ENCODE measurements at regions of chr16 and their contacts with region 1.

Region 1: GRCh38 chr16:10625593-10626273 is 45.3 kb upstream of the EMP2 start:
- DNase-seq: peak in 1 of 4 experiments; percentile 23
- ATAC-seq: no peak
- H3K4me3 ChIP-seq: no peak overlapping the region
- H3K27ac ChIP-seq: no peak overlapping the region; the same call in 2 of the 3 replicates
- H3K4me1 ChIP-seq: peaks cover 21 to 30% of the 10 kb centered on the region in 2 experiments; a peak in 4 of 5 replicates
- H3K27me3 ChIP-seq: no peaks in the 10 kb centered on the region; a peak in 1 of 5 replicates
- CTCF ChIP-seq: no peak
- EP300 ChIP-seq: peak; percentile 24; the same call in 1 of the 2 replicates
- POLR2A ChIP-seq: no peak
- RAD21 ChIP-seq: no peak

Region 2: DNA sequence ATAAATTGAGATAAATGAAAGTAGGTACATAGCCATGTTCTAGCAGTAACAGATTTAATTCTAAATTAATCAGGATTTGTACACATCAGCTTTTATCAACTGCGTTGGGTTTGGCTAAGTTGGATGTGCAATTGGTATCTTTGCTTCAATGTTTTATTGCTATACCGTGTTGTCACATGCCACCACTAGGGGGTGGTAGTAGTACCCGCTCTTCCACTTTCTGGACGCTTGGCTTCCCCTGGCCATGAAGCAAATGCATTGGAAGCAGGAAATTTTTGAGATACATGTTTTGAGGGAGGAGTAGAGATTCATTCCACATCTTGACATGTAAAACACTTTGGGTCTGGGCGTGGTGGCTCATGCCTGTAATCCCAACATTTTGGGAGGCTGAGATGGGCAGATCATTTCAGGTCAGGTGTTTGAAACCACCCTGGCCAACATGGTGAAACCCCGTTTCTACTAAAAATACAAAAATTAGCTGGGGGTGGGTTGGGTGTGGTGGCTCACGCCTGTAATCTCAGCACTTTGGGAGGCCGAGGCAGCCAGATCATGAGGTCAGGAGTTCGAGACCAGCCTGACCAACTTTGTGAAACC is 104.0 kb before region 1 on chr16:
- CTCF ChIA-PET with region 1: no interaction called
- POLR2A ChIA-PET with region 1: no interaction called
- in situ Hi-C with region 1: no loop called
- intact Hi-C with region 1: loop called (anchors 5 kb)
- DNase-seq: peak; percentile 62 to 80 (median 70)
- ATAC-seq: peak; percentile 88
- H3K4me3 ChIP-seq: no peak overlapping the region
- H3K27ac ChIP-seq: no peak overlapping the region
- H3K4me1 ChIP-seq: no peaks in the 10 kb centered on the region
- H3K27me3 ChIP-seq: peaks cover 6 to 8% of the 10 kb centered on the region in 2 experiments; a peak in 4 of 5 replicates
- CTCF ChIP-seq: peak; percentile 86 to 93 (median 90)
- EP300 ChIP-seq: no peak
- POLR2A ChIP-seq: no peak
- RAD21 ChIP-seq: peak; percentile 51 to 84

Region 3: DNA sequence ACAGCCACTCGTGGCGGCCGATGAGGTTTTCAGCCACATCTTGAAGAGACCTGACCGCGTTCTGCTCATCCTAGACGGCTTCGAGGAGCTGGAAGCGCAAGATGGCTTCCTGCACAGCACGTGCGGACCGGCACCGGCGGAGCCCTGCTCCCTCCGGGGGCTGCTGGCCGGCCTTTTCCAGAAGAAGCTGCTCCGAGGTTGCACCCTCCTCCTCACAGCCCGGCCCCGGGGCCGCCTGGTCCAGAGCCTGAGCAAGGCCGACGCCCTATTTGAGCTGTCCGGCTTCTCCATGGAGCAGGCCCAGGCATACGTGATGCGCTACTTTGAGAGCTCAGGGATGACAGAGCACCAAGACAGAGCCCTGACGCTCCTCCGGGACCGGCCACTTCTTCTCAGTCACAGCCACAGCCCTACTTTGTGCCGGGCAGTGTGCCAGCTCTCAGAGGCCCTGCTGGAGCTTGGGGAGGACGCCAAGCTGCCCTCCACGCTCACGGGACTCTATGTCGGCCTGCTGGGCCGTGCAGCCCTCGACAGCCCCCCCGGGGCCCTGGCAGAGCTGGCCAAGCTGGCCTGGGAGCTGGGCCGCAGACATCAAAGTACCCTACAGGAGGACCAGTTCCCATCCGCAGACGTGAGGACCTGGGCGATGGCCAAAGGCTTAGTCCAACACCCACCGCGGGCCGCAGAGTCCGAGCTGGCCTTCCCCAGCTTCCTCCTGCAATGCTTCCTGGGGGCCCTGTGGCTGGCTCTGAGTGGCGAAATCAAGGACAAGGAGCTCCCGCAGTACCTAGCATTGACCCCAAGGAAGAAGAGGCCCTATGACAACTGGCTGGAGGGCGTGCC is 281.4 kb after region 1 on chr16:
- CTCF ChIA-PET with region 1: no interaction called
- POLR2A ChIA-PET with region 1: no interaction called
- in situ Hi-C with region 1: no loop called
- intact Hi-C with region 1: no loop called
- DNase-seq: no peak
- ATAC-seq: peak; percentile 46
- H3K4me3 ChIP-seq: no peak overlapping the region
- H3K27ac ChIP-seq: no peak overlapping the region
- H3K4me1 ChIP-seq: peaks cover 0 to 17% of the 10 kb centered on the region in 2 experiments; a peak in 2 of 5 replicates
- H3K27me3 ChIP-seq: peaks cover 48 to 59% of the 10 kb centered on the region in 2 experiments; a peak in 4 of 5 replicates
- CTCF ChIP-seq: no peak
- EP300 ChIP-seq: no peak
- POLR2A ChIP-seq: no peak
- RAD21 ChIP-seq: no peak